ENCODE measurements at regions of chr11 and their contacts with region 1.

Region 1: DNA sequence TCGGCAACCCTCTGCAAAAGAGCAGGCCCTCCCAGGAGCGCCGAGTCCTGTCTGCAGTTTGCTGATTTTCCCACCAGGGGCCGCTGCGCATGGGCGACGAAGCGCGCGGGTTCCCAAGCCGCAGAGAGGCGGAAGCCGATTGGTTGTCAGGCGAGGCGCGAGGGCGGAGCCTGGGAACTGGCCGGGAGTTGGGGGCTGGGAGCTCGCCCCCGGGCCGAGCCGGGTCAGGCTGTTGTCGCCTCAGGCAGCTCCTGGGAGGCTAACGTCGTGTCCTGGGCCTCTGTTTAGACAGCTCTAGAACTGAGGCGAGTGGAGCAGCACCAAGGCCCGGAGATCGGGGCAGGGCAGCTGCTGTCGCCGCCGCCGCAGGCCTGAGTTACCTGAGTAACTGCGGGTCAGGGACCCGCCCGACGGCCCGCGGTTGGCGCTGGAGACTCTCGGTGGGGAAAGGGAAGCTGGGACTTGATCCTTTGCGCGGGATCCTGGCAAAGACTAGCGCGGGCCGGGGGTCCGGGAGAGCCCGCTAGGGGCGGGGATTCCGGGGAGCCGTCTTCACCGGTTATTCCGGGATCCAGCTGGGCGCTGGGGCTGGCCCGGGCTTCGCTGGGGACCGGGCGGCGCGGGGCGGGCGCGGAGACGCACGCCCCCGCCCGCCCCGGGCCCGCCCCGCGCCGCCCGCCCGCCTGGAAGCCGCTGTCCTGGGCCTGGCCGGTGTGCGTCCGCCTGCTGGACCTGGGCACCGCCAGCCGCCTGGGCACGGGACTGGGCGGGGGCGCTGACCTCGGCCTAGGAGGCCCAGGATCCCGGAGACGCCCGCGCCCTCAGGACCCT is at the start of gene STIM1:
- DNase-seq: peak; percentile 90 to 99 (median 95)

Region 2: DNA sequence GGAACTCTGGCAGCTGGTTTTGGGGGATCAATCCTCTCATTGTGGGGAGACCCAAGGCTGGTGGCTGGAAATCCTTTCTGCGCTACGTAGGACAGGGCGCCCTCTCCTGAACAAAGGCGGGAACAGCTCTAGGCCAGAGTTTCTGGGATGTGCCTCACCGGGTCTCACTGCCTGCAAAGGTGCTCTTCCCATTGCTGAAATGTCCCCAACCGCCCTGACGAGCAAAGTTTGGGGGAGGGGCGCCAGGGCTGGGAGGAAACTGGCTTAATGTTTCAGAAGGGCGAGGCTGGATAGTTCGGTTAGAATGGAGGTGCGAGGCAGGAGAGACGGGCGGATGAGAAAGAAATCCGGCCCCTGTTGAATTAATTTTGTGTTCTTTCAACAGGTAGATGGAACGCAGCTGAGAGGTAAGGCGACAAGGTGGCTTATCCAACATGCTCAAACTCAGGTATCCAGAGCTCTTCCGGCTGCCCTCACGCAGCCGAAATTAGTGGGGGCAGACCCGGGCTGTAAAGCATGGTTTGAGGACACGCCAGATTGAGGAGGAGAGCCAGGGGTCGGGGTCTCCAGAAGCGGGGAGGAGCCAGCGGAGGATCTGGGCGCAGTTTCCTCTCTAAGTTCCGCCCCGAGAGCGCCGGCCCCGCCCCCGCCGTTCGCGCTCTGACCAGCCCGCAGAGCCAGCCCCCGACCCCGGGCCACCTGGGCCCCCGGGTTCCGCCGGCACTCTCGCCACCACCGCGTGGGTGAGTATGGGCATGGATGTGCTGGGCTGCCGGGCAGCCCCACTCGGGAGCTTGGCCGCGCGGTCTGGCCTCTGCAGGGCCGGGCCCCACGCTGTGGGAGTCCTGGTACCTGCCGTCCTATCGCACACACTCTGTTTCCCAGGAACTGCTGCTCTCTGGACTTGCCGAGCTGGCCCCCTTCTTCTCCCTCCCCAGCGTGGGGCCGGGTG is 47.0 kb before region 1 on chr11 and contains the start of gene PGAP2:
- intact Hi-C with region 1: no loop called
- DNase-seq: peak in 8 of 10 donors; percentile 50 to 91 (median 60)

Region 3: DNA sequence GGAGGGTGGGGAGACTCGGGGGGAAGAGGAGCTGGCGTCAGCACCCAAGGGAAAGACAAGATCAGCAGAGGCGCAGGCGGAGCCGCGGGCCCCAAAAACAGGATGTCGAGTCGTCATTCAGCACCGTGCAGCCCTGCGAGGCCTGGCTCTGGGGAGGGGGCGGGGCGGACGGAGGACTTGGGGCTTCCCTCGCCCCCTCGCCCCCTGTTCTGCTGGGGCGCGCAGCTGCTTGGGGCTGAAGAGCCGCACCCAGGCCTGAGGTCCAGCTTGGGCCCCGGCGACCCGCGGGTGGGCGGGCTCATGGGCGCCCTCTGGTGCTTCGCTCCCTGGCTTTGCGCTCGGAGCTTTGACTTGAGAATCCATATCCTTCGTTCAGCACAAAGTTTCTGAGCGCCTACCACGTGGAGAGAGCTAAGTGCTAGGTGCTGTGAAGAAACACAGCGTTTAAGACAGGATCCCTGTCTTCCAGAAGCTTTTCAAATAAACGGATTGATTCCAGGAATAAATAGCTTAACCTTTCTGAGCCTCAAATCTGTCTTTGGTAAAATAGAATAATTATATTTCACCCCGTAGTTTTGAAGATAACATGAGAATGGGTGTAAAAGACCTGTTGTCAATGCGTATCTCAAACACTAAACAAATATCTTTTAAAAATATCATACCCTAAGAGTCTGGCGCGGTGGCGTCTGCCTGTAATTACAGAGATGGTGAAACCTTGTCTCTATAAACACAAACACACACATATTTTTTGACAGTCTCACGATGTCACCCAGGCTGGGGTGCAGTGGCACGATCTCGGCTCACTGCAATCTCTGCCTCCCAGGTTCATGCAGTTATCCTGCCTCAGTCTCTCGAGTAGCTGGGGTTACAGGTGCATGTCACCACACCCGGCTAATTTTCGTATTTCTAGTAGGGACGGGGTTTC is 13.5 kb before region 1 on chr11:
- intact Hi-C with region 1: loop called (anchors 1 kb)
- DNase-seq: peak; percentile 75 to 97 (median 86)

Region 4: GRCh38 chr11:3984896-3985295 is 129.7 kb after region 1 on chr11:
- intact Hi-C with region 1: loop called (anchors 10 kb)
- DNase-seq: peak in 2 of 10 donors; percentile 11 to 15

Region 5: DNA sequence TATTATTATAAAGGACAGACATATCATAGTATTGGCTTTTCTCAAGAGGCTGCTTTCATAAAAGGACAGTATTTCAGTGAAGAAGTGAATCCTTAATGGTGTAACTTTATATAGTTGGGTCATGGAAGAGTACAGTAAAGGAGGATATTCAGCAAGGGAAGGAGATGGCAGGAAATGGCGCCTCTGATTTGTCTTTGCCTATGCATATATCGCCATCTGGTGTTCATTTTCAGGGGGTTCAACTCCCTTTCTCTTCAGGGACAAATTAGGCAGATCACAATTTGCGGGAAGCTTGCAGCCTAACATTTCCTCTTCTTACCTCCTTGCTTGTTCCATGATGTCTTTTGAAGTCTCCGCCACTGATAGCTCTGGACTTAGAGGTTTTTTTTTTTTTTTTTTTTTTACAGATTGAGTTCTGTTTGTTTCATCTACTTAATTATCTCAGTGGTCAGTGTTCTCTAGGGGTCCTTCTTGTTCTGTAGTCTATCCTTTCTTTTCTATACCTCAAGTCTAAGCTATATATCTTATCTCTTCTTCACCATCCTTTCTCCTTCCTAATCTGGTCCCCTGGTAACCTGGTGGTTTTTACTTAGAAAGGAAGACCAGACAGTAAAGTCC is 217.6 kb after region 1 on chr11:
- intact Hi-C with region 1: loop called (anchors 1 kb)
- DNase-seq: peak in 5 of 10 donors; percentile 34 to 87 (median 40)

Region 6: GRCh38 chr11:4375431-4376140 is 520.4 kb after region 1 on chr11:
- intact Hi-C with region 1: no loop called
- DNase-seq: no peak

Measured in posterior cingulate gyrus (tissue), 11 donors.